Left ventricle myocardium superior (tissue), 1 donor: ENCODE measurements at regions of chr6 and their contacts with region 1.

Region 1: DNA sequence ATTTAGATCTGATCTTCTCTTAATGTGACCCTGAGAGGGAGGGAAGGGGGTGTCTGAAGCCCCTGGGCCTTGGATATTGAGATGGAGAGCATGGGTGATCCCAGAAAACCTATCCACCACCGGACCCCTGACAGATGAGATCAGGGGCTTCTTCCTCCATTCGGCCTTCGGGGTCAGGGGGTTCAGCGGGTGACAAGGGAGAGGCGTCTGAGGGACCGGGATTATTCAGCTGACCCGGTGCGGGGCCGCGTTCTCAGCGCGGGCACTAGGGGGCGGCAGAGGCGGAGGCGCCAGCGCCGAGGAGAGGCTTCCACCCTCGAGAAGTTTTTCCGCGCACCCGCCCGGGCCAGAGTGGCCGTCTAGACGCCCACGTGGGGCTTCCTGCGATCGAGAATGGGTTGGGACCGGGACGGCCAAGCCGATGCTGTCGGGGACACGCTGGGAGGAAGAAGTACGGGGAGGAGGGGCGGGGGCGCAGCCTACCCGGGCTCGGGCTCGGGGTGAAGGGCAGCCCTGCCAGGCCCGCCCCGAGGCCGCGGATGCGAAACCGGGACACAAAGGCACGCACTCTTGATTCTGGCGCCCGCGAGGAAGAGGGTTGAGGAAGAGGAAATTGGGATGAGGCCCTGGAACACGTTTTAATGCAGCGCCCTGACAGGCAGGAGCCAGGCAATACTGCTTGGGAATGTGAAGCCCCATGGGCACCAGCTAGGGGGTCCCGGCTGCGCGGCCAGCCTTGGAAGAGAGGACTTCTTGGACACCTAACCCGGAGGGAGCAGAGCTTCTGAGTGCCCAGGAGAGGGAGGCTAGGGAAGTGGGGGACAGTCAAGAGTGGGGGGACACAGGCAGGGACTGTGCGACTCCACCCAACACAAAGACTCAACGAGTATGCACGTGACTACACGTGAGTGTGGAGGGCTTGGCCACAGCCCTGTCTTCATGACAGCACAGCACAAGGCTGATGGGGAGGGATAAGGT is 30.6 kb downstream of the COL11A2 start:
- DNase-seq: peak; percentile 90
- ATAC-seq: peak; percentile 91

Region 2: GRCh38 chr6:32894080-32895005 is 267.3 kb before region 1 on chr6:
- intact Hi-C with region 1: no loop called
- DNase-seq: peak; percentile 95
- ATAC-seq: peak; percentile 100

Region 3: GRCh38 chr6:33040157-33040556 is 121.5 kb before region 1 on chr6:
- intact Hi-C with region 1: no loop called
- DNase-seq: no peak
- ATAC-seq: no peak

Region 4: GRCh38 chr6:33248925-33249731 is 87.5 kb after region 1 on chr6:
- intact Hi-C with region 1: loop called (anchors 5 kb)
- DNase-seq: peak; percentile 97
- ATAC-seq: peak; percentile 96